ENCODE measurements at regions of chr6 and their contacts with region 1.

Region 1: DNA sequence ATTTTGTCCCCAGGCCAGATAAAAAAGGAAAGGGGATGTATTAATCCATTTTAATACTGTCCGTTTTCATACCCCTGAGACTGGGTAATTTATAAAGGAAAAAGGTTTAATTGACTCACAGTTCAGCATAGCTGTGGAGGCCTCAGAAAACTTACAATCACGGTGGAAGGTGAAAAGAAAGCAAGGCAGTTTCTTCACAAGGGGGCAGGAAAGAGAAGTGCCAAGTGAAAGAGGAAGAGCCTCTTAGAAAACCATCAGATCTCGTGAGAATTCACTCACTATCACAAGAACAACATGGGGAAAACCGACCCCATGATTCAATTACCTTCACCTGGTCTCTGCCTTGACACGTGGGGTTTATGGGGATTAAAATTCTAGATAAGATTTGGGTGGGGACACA is 152.5 kb downstream of the IBTK start:
- DNase-seq: no peak
- H3K4me3 ChIP-seq: no peak overlapping the region
- H3K4me3 Mint-ChIP-seq: no peak overlapping the region
- H3K27ac Mint-ChIP-seq: no peak overlapping the region
- H3K4me1 ChIP-seq: peaks cover 14% of the 10 kb centered on the region
- H3K4me1 Mint-ChIP-seq: peaks cover 19% of the 10 kb centered on the region
- H3K27me3 ChIP-seq: no peaks in the 10 kb centered on the region
- H3K27me3 Mint-ChIP-seq: no peaks in the 10 kb centered on the region
- CTCF ChIP-seq: no peak

Region 2: DNA sequence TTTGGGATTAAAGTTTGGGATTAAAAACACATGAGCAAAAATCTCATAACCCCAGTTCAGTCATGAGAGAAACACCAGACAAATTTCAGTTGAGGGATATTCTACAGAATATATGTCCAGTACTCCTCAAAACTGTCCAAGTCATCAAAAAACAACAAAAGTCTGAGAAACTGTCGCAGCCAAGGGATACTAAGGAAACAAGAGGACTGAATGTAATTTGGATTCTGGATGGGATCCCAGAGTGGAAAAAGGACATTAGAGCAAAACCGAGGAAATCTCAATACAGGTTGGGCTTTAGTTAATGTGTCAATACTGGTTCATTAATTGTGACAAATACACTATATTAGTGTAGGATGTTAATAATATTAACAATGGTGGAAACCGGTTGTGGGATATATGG is 1769.3 kb before region 1 on chr6:
- CTCF ChIA-PET with region 1: no interaction called
- POLR2A ChIA-PET with region 1: no interaction called
- intact Hi-C with region 1: no loop called
- DNase-seq: no peak
- H3K4me3 ChIP-seq: no peak overlapping the region
- H3K4me3 Mint-ChIP-seq: no peak overlapping the region
- H3K27ac Mint-ChIP-seq: no peak overlapping the region
- H3K4me1 ChIP-seq: no peaks in the 10 kb centered on the region
- H3K4me1 Mint-ChIP-seq: no peaks in the 10 kb centered on the region
- H3K27me3 ChIP-seq: no peaks in the 10 kb centered on the region
- H3K27me3 Mint-ChIP-seq: no peaks in the 10 kb centered on the region
- CTCF ChIP-seq: no peak

Region 3: DNA sequence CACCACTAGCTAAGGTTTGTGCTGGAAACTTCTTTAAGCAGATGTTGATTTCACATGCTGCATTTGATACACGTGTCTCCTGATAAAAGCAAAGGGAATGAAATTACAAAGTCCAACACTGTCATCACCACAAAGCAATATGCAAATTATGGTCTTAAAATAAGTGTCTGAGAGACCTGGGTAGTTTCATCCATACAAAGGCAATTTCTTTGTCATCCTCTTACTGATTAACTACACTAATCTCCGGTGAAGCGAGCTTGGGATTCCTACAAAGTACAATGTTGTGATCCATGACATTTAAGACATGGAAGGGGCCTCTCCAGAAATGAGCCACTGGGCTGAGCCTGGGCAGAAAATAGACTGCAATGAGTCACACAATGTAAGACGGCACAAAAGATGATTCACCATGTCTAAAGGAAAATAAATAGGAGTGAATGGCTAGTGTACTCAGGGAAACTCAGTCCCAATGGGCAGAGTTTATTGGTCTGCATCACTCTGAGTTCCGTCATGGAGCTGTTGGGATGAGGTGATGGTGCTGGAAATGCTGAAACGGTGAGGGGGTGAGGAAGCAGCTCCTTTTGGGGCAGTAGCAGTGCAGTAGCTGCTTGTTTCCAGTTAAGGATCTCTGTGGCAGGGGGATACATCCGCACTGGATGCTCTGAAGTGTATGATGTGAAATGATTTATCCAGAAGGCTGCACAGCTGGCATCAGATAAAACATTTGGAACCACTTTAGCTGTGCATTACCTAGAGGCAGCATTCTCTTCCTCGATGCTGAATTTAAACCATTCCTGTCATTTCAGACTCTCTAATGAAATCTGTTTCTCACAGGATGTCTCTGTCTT is 49.1 kb after region 1 on chr6:
- CTCF ChIA-PET with region 1: no interaction called
- POLR2A ChIA-PET with region 1: no interaction called
- intact Hi-C with region 1: loop called (anchors 5 kb)
- DNase-seq: peak; percentile 71 to 81
- H3K4me3 ChIP-seq: no peak overlapping the region
- H3K4me3 Mint-ChIP-seq: peak overlapping the region; percentile 67
- H3K27ac Mint-ChIP-seq: peak overlapping the region; percentile 90
- H3K4me1 ChIP-seq: peaks cover 34% of the 10 kb centered on the region
- H3K4me1 Mint-ChIP-seq: peaks cover 18% of the 10 kb centered on the region
- H3K27me3 ChIP-seq: no peaks in the 10 kb centered on the region
- H3K27me3 Mint-ChIP-seq: no peaks in the 10 kb centered on the region
- CTCF ChIP-seq: no peak

Region 4: GRCh38 chr6:82160255-82160990 is 65.3 kb after region 1 on chr6:
- CTCF ChIA-PET with region 1: no interaction called
- POLR2A ChIA-PET with region 1: no interaction called
- intact Hi-C with region 1: loop called (anchors 5 kb)
- DNase-seq: no peak
- H3K4me3 ChIP-seq: no peak overlapping the region
- H3K4me3 Mint-ChIP-seq: no peak overlapping the region
- H3K27ac Mint-ChIP-seq: no peak overlapping the region
- H3K4me1 ChIP-seq: no peaks in the 10 kb centered on the region
- H3K4me1 Mint-ChIP-seq: no peaks in the 10 kb centered on the region
- H3K27me3 ChIP-seq: no peaks in the 10 kb centered on the region
- H3K27me3 Mint-ChIP-seq: no peaks in the 10 kb centered on the region
- CTCF ChIP-seq: no peak